ENCODE measurements at regions of chr17 and their contacts with region 1.

Region 1: GRCh38 chr17:80855948-80856862 is 135.4 kb upstream of the CHMP6 start:
- DNase-seq: peak; percentile 97
- H3K4me3 Mint-ChIP-seq: peak overlapping the region; percentile 36
- H3K27ac Mint-ChIP-seq: peak overlapping the region; percentile 91
- H3K4me1 Mint-ChIP-seq: peaks cover 35% of the 10 kb centered on the region
- H3K27me3 Mint-ChIP-seq: no peaks in the 10 kb centered on the region
- CTCF ChIP-seq: no peak

Region 2: DNA sequence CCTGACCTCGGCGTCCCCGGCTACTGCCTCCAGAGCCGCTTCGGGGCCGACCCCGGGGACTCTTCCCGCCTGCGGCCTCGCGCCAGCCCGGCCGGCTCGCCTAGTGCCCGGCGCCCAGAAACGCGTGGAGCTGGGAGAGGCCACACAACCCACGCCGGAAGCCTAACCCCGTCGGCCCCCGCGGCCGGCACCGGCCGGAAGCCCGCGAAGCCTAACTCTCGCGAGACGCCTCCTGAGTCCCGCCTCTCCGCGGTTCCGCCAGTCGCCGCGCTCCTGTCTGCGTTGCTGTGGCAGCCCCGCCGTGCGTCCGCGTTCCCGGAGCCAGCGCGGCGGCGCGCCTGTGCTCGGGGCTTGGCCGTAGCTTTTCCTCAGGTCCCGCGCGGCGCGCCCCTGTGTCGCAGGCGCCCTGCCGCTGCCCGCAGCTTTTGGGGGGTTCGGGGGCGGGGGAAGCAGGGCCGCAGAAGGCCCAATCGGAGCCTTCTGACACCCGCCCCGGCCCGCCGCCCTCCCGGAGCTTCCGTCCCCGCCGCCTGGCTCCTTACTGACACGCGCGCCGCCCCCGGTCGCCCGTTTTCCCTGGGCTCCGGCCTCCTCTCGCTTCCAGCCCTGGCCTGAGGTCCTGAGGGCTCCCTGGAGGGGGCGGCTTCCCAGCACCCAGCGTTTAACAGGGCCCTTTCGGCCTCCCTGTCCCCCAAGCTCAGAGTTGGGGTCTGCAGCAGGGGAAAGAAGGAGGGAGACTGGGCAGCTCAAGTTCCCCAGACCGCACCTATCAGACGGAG is 401.5 kb before region 1 on chr17:
- CTCF ChIA-PET with region 1: no interaction called
- POLR2A ChIA-PET with region 1: interaction called, 16 read pairs
- intact Hi-C with region 1: no loop called
- DNase-seq: peak; percentile 94
- H3K4me3 Mint-ChIP-seq: peak overlapping the region; percentile 92
- H3K27ac Mint-ChIP-seq: peak overlapping the region; percentile 99
- H3K4me1 Mint-ChIP-seq: peaks cover 9% of the 10 kb centered on the region
- H3K27me3 Mint-ChIP-seq: no peaks in the 10 kb centered on the region
- CTCF ChIP-seq: no peak

Region 3: DNA sequence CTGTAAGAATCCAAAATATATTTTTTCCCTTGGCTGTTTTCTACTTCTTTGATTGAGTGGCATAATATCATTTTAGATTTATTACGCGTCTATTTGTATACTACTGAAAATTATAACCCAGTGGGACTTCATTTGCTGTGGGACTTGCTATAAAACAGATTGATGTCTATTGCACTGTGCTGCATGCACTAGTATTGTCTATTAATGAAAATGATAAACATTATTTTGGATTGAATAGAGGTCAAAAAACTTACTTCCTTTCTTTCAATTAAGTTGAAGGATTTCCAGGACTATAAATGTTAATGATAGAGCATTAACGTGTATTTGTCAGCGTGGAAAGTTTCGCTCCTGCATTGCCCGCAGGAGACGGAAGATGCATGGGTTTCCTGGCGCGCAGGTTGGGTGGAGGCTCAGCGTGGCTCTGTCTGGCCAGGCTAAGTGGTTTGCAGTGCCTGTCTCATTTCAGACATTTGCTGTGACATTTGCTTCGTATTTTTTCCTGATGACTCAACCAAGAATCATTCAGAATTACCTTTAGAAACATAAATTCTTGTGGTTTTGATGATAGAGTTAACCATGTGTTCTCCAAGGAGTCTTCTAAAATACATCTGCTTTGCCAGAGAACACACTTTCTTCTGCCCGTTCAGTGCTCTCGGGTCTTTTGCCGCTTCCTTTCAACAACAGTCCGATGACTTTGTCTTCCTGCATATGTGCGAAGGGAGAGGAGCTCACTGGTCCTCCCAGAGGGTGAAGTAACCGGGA is 94.9 kb before region 1 on chr17:
- CTCF ChIA-PET with region 1: no interaction called
- POLR2A ChIA-PET with region 1: no interaction called
- intact Hi-C with region 1: loop called (anchors 5 kb)
- DNase-seq: peak; percentile 77
- H3K4me3 Mint-ChIP-seq: peak overlapping the region; percentile 59
- H3K27ac Mint-ChIP-seq: peak overlapping the region; percentile 75
- H3K4me1 Mint-ChIP-seq: peaks cover 24% of the 10 kb centered on the region
- H3K27me3 Mint-ChIP-seq: no peaks in the 10 kb centered on the region
- CTCF ChIP-seq: no peak

Region 4: DNA sequence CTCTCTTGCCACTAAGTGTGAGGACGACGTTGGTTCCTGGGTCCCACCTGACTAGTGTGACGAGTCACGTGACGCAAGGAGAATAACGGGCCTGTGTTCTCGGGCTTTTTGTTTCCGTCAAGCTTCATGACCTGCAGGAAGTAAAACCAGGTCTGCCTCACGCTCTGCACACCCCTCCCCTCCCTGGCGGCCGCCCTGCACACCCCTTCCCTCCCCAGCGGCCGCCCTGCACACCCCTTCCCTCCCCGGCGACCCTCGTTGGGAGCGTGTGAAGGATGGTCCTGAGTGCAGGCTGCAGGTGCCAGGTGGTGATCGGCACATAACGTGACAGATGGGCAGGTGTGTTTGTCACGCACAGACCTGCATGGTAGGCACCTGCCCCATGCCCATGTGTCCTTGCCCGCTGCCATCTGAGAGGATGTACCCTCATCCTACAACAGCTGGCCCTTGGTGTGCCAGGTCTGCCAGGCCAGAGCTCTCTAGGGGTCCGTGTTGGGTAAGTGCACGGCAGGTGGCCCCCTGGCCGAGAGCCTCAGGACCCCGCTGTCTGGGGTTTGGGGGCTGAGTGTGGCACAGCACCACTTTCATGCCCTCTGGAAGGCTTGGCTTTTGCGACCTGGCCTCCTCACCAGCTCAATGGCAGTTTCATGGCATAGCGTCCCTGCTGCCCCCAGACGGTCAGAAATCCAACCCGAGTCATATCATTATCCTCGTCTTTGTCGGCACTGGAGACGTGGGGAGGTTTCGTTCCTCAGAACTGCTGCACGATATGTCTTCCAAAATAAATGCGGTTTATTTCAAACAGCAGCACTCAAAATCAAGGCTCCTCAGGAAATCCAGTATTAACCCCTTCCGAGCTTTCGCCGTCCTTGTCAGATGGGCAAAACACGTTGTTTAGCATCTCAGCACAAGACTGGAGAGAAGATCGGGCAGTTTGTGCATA is 56.4 kb before region 1 on chr17:
- CTCF ChIA-PET with region 1: no interaction called
- POLR2A ChIA-PET with region 1: no interaction called
- intact Hi-C with region 1: no loop called
- DNase-seq: no peak
- H3K4me3 Mint-ChIP-seq: no peak overlapping the region
- H3K27ac Mint-ChIP-seq: no peak overlapping the region
- H3K4me1 Mint-ChIP-seq: no peaks in the 10 kb centered on the region
- H3K27me3 Mint-ChIP-seq: no peaks in the 10 kb centered on the region
- CTCF ChIP-seq: no peak

Region 5: DNA sequence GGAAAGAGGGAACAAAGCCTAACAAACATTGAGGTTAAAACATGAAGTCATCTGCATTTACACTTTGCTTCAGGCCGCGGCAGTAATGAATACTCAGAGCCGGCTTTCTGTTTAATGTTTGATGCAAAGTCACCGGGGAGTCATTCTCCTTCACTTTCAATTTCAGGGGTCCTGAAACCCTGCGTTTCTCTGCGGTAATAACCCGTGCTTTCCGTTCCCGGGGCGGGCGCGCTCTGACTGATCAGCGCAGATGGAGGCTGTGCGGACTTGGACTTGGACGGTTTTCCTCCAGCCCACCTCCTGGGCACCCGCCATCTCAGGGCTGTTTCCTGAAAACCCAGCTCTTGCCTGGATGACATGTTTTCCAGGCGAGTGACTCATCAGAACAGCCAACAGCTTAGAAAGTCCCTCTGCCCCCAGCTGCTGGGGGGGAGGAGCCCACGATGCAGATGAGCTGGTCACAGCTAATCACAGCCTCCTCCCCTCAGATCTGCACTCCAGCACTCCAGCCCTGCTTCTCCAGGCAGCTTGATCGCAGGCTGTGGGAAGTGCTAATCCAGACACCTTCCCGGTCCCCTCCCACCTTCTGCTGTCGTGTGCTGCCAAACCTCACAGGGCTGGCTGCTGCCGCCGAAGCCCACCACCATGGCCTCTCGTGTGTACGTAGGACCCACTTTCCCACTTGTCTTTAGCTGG is 23.2 kb before region 1 on chr17:
- CTCF ChIA-PET with region 1: interaction called, 4 read pairs
- POLR2A ChIA-PET with region 1: interaction called, 18 read pairs
- intact Hi-C with region 1: loop called (anchors 2 kb)
- DNase-seq: peak; percentile 97
- H3K4me3 Mint-ChIP-seq: peak overlapping the region; percentile 79
- H3K27ac Mint-ChIP-seq: peak overlapping the region; percentile 93
- H3K4me1 Mint-ChIP-seq: peaks cover 15% of the 10 kb centered on the region
- H3K27me3 Mint-ChIP-seq: no peaks in the 10 kb centered on the region
- CTCF ChIP-seq: no peak

Region 6: DNA sequence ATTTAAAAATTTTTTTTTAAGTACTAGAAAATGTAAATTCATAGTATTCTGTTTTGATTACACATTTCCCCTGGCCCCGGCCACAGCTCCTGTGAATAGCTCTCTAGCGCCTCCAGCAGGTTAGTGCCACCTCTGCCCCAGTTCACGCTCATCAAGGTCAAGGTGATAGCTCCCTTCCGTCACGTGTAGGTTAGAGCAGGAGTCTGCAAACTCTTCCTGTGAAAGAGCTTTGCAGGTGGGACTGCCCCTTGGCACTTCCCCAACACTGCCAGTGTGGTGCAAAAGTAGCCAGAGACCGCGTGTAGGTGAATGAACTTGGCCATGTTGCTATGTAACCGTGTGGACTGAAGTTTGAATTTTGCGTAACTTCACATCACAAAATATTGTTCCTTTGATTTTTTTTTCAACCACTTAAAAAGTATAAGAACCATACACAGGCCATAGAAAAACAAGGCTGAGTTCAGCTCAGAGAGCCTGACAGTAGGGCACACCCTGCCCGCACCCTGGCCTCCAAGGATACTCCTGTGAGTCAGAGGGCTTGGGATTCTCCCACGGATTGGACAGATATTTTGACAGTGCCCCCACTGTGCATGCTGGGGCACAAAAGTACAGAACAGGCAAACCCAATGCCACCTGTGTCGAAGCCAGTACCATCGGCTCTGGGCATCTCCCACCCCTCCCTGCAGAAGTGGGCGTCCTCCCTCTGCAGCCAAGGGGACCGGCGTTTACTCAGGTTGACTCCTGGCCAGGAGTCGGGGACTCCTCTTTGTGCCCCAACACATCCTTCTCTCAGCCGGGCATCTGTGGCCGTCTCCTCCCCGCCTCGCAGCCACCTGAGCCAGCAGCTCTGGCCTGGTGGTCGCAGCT is 43.4 kb after region 1 on chr17:
- CTCF ChIA-PET with region 1: interaction called, 4 read pairs
- POLR2A ChIA-PET with region 1: interaction called, 17 read pairs
- intact Hi-C with region 1: loop called (anchors 5 kb)
- DNase-seq: peak; percentile 85
- H3K4me3 Mint-ChIP-seq: peak overlapping the region; percentile 12
- H3K27ac Mint-ChIP-seq: peak overlapping the region; percentile 39
- H3K4me1 Mint-ChIP-seq: peaks cover 36% of the 10 kb centered on the region
- H3K27me3 Mint-ChIP-seq: no peaks in the 10 kb centered on the region
- CTCF ChIP-seq: peak; percentile 88

Region 7: GRCh38 chr17:81002409-81003361 is 146.5 kb after region 1 on chr17:
- CTCF ChIA-PET with region 1: no interaction called
- POLR2A ChIA-PET with region 1: no interaction called
- intact Hi-C with region 1: no loop called
- DNase-seq: peak; percentile 64
- H3K4me3 Mint-ChIP-seq: peak overlapping the region; percentile 10
- H3K27ac Mint-ChIP-seq: no peak overlapping the region
- H3K4me1 Mint-ChIP-seq: peaks cover 11% of the 10 kb centered on the region
- H3K27me3 Mint-ChIP-seq: peaks cover 30% of the 10 kb centered on the region
- CTCF ChIP-seq: no peak